ENCODE measurements at regions of chr12 and their contacts with region 1.

Region 1: DNA sequence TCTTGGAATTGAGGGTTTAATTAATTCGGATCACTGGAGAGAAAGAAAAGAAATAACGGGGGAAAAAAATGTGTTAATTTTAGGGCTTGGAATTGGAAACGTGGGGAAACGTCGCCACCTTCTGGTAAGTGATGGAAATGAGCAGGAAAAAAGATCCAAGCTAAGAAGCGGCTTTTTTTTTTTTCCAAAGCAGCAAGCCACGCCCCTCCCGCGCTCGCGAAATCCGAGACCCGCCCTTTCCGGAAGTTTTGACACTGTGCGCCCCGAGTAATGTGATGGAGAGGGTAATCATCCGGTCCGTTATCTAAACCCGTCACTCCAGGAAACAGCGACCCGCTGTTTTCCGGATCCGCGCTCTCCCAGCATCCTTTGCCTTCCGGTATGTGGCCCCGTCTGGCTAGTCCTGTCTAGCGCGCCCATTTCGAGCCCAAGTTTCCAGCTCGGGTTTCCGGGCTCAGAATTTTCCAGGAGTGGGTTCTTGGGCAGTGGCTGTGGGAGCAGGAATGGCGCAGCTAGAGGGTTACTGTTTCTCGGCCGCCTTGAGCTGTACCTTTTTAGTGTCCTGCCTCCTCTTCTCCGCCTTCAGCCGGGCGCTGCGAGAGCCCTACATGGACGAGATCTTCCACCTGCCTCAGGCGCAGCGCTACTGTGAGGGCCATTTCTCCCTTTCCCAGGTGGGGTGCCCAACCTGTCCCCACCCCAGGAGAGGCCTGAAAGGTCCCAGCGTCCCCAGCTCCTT is at the start of gene ALG10B:
- DNase-seq: peak; percentile 92 to 96 (median 95)
- ATAC-seq: peak; percentile 100
- H3K4me3 ChIP-seq: peak within 1 kb of the TSS; percentile 84
- H3K27ac ChIP-seq: peak within 1 kb of the TSS; percentile 71
- H3K4me1 ChIP-seq: no peaks in the 10 kb centered on the region
- H3K27me3 ChIP-seq: no peaks in the 10 kb centered on the region
- total RNA-seq, gene ALG10B: 5.9 to 7.6 (median 7.2) TPM

Region 2: DNA sequence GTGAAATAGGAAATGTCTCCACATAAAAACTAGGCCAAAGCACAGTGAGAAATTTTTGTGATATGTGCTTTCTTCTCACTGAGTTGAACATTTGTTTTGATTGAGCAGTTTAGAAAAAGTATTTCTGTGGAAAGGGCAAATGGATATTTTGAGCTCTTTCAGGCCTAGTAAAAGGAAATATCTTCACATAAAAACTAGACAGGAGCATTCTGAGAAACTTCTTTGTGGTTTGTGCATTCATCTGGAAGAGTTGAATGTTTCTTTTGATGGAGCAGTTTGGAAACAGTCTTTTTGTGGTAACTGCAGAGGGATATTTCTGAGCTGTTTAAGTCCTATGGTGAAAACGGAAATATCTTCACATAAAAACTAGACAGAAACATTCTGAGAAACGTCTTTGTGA is 582.7 kb before region 1 on chr12:
- intact Hi-C with region 1: no loop called
- DNase-seq: no peak
- ATAC-seq: no peak
- H3K4me3 ChIP-seq: no peak overlapping the region
- H3K27ac ChIP-seq: no peak overlapping the region
- H3K4me1 ChIP-seq: no peaks in the 10 kb centered on the region
- H3K27me3 ChIP-seq: no peaks in the 10 kb centered on the region

Region 3: GRCh38 chr12:38138225-38139221 is 178.0 kb before region 1 on chr12:
- intact Hi-C with region 1: loop called in 3 of 4 experiments (anchors 2 to 5 kb)
- DNase-seq: peak; percentile 57 to 71 (median 59)
- ATAC-seq: peak; percentile 57 to 78
- H3K4me3 ChIP-seq: peak overlapping the region; percentile 11
- H3K27ac ChIP-seq: no peak overlapping the region
- H3K4me1 ChIP-seq: no peaks in the 10 kb centered on the region
- H3K27me3 ChIP-seq: no peaks in the 10 kb centered on the region